Activated naive CD4-positive, alpha-beta T cell treated with anti-CD3 and anti-CD28 coated beads for 36 hours (primary cell): ENCODE measurements at regions of chr7 and their contacts with region 1.

Region 1: GRCh38 chr7:138752568-138753518 is 45.0 kb upstream of the TMEM213 start:
- DNase-seq: peak; percentile 98
- H3K4me3 Mint-ChIP-seq: no peak overlapping the region
- H3K27ac Mint-ChIP-seq: peak overlapping the region; percentile 80
- H3K4me1 Mint-ChIP-seq: peaks cover 55% of the 10 kb centered on the region
- H3K27me3 Mint-ChIP-seq: no peaks in the 10 kb centered on the region

Region 2: DNA sequence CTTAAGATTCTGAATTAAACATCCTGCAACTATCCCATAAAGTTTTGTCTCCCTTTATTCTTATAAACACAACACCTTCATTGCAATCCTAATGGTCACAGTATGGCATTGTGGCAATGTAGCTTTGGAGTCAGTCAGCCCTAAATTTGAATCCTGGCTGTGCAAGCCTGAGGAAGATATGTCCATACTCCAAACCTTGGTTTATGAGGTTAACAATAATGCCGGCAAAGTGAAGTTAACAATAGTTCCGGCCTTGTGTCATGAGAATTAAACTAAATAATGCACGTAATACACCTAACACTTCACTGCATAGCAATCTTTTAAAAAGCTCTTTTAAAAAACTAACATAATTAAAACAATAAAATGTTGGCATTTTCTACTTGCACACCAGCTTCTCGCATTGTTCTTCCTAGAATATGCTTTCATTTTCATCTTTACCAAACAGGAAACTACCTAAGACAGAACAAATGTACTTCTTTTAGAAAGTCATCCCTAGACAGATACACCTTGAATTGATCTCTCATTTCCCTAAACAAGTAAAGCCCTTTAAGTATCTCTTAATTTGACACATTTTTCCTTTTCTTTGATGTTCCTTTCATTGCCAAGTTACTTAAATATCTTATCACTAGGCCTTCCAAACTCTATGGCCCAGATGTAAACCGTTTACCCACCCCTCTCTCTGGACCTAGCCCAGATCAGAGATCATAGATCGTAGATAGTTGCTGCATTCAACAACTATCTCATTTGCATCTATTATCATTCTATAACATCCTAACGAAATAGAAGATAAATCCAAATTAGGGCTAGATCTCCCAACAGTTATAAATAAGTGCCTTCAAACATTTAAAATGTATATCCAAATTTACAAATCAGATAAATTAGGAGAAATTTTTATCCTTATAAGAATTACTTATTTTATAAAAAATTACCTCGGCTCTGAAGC is 817.6 kb before region 1 on chr7:
- CTCF ChIA-PET with region 1: no interaction called
- intact Hi-C with region 1: loop called (anchors 1 kb)
- DNase-seq: no peak
- H3K4me3 Mint-ChIP-seq: peak overlapping the region; percentile 54
- H3K27ac Mint-ChIP-seq: peak overlapping the region; percentile 76
- H3K4me1 Mint-ChIP-seq: peaks cover 44% of the 10 kb centered on the region
- H3K27me3 Mint-ChIP-seq: no peaks in the 10 kb centered on the region

Region 3: GRCh38 chr7:138161600-138162081 is 591.2 kb before region 1 on chr7:
- CTCF ChIA-PET with region 1: no interaction called
- intact Hi-C with region 1: loop called (anchors 5 kb)
- DNase-seq: peak; percentile 88
- H3K4me3 Mint-ChIP-seq: no peak overlapping the region
- H3K27ac Mint-ChIP-seq: no peak overlapping the region
- H3K4me1 Mint-ChIP-seq: no peaks in the 10 kb centered on the region
- H3K27me3 Mint-ChIP-seq: no peaks in the 10 kb centered on the region

Region 4: GRCh38 chr7:138625849-138626230 is 127.0 kb before region 1 on chr7:
- CTCF ChIA-PET with region 1: no interaction called
- intact Hi-C with region 1: loop called (anchors 2 kb)
- DNase-seq: peak; percentile 38
- H3K4me3 Mint-ChIP-seq: no peak overlapping the region
- H3K27ac Mint-ChIP-seq: peak overlapping the region; percentile 72
- H3K4me1 Mint-ChIP-seq: peaks cover 43% of the 10 kb centered on the region
- H3K27me3 Mint-ChIP-seq: no peaks in the 10 kb centered on the region

Region 5: DNA sequence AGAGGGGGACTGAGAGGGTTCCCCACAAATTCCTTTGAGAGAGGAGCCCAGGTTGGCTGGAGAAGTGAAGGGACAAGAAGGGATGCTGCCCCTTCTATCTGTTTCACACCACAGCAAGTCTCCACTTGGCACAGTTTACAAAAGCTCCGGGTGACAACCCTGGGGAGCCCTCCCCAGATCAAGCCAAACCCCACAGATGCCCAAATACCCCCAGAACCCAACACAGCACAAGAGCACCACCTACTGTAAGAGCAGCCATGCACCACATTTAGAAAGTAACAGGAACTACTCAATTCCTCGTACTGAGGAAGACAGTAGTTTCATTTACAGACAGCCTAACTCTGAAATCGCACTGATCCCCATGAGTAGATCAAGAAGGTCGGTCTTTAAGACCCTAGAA is 113.0 kb after region 1 on chr7:
- CTCF ChIA-PET with region 1: interaction called, 3 read pairs
- intact Hi-C with region 1: loop called (anchors 1 kb)
- DNase-seq: peak; percentile 67
- H3K4me3 Mint-ChIP-seq: no peak overlapping the region
- H3K27ac Mint-ChIP-seq: no peak overlapping the region
- H3K4me1 Mint-ChIP-seq: peaks cover 19% of the 10 kb centered on the region
- H3K27me3 Mint-ChIP-seq: no peaks in the 10 kb centered on the region

Region 6: DNA sequence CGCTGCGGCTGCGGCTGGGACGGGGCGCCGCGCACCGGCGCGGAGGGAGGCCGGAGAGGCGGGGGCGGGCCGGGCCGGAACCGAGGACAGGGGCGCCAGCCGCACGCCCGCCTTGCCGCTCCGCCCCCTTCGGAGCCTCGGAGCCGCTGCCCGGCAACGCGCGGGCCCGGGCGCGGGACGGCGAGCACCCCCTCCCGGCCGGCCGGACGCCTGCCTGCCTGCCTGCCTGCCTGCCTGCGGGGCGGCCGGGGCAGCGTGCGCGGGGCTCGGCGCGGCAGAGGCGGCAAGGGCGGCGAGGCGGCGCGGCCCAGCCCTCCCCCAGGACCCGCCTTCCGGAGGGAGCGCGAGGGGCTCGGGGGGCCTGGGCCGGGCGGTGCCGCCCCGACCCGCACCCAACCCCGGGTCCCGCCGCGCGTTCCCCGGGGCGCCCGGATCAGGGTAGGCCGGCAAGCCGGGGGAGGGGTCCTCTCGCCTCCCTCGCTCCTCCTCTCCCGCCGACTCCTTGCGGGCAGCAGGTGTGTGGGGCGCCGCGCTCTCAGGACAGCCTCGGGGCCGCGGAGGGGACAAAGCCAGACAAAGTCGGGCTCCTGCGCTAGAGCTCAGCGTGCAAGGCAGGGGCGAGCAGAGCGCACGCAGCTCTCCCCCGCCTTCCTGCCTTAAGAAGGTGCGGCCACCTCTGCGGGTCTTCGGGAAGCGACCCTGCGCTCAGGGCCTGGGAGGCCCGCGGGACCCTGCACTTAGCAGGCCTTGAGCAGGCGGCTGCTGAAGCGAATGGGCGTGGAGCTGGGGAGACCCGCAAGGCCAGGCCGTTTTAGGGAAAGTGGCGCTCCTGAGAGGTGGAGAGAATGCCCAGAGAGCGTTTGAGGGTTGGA is 228.7 kb after region 1 on chr7 and contains the start of gene KIAA1549:
- CTCF ChIA-PET with region 1: no interaction called
- intact Hi-C with region 1: loop called (anchors 2 kb)
- DNase-seq: peak; percentile 59
- H3K4me3 Mint-ChIP-seq: peak within 1 kb of the TSS; percentile 80
- H3K27ac Mint-ChIP-seq: no peak within 1 kb of the TSS
- H3K4me1 Mint-ChIP-seq: peaks cover 8% of the 10 kb centered on the region
- H3K27me3 Mint-ChIP-seq: peaks cover 36% of the 10 kb centered on the region
- total RNA-seq, gene KIAA1549: 0.60 to 0.67 TPM

Region 7: GRCh38 chr7:139230774-139231512 is 478.1 kb after region 1 on chr7 and contains the start of gene UBN2:
- CTCF ChIA-PET with region 1: no interaction called
- intact Hi-C with region 1: loop called (anchors 2 kb)
- DNase-seq: peak; percentile 95
- H3K4me3 Mint-ChIP-seq: peak within 1 kb of the TSS; percentile 90
- H3K27ac Mint-ChIP-seq: peak within 1 kb of the TSS; percentile 75
- H3K4me1 Mint-ChIP-seq: peaks cover 20% of the 10 kb centered on the region
- H3K27me3 Mint-ChIP-seq: no peaks in the 10 kb centered on the region
- total RNA-seq, gene UBN2: 9.7 to 10.6 TPM